PC-9 (cell line): ENCODE measurements at regions of chr5 and their contacts with region 1.

Region 1: DNA sequence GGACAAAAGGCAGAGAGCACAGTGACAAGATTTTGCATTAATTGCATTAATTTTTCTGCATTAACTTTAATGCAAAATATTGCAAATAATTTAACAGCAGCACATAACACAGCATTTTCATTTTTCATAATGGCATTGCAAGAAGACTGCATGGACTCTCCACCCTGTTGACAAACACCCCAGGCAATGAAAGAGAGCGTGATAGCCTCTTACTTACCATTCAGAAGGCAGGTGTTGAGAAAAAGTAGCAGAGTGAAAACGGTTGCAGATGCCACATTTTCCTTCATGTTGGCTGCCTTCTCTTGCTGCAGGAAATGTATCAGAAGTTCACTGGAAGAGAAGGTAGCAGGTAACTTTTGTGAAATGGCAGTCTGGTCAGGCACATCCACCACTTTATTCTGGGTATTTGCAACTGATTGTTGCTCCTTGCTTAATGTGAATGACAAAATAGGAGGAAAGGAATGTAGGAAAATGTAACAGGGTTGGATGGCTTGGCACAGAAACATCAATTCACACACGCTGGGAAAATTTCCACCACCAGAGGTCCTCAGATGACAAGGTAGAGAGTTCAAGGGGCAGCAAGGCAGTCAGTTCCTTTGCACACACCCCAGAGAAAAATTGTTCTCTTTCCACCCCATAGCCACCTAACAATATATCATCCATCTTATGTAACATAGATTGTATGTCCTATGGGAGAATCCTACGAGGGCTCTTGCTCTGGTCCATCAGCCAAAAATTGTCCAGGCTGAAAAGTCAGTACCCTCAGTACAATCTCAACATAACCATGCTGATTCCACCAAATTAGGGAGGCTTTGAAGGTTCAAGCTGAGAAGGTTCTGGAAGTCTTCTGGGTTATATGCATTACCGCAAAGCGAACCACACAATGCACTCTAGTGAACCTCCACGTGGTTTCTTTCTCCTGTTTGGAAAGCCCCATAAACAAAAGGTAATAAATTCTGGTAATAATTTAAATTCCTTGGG is 41.9 kb upstream of the AGXT2 start:
- DNase-seq: peak; percentile 44 to 46
- H3K4me3 ChIP-seq: no peak overlapping the region
- H3K27ac ChIP-seq: no peak overlapping the region
- H3K4me1 ChIP-seq: no peaks in the 10 kb centered on the region
- H3K27me3 ChIP-seq: peaks cover 72% of the 10 kb centered on the region
- CTCF ChIP-seq: peak; percentile 80

Region 2: GRCh38 chr5:35202319-35203111 is 112.9 kb after region 1 on chr5:
- CTCF ChIA-PET with region 1: no interaction called
- POLR2A ChIA-PET with region 1: no interaction called
- intact Hi-C with region 1: loop called (anchors 5 kb)
- DNase-seq: peak in 1 of 2 experiments; percentile 41
- H3K4me3 ChIP-seq: no peak overlapping the region
- H3K27ac ChIP-seq: no peak overlapping the region
- H3K4me1 ChIP-seq: no peaks in the 10 kb centered on the region
- H3K27me3 ChIP-seq: peaks cover 32% of the 10 kb centered on the region
- CTCF ChIP-seq: peak; percentile 67

Region 3: DNA sequence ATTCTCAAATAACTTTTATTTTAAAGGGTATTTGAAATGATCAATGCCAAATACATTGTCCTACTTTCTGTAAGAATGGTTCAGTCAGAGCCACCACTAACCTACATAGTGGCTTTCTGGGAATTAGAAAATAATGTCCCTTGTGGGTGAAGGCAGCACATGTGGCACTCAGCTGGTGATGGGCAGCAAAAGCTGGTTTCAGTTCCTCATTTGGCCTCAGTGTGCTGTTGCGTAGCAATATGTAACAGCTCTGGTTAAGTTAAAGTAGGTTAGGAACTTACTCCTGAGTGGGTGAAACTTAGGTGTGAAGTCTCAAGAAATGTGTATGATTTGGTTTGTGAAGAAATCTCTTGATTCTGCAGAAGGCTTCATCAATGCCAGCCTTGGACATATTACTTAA is 428.5 kb after region 1 on chr5:
- CTCF ChIA-PET with region 1: no interaction called
- POLR2A ChIA-PET with region 1: no interaction called
- intact Hi-C with region 1: no loop called
- DNase-seq: no peak
- H3K4me3 ChIP-seq: no peak overlapping the region
- H3K27ac ChIP-seq: no peak overlapping the region
- H3K4me1 ChIP-seq: no peaks in the 10 kb centered on the region
- H3K27me3 ChIP-seq: peaks cover 13% of the 10 kb centered on the region
- CTCF ChIP-seq: no peak

Region 4: GRCh38 chr5:35762368-35762767 is 672.7 kb after region 1 on chr5:
- CTCF ChIA-PET with region 1: no interaction called
- POLR2A ChIA-PET with region 1: no interaction called
- intact Hi-C with region 1: no loop called
- DNase-seq: no peak
- H3K4me3 ChIP-seq: no peak overlapping the region
- H3K27ac ChIP-seq: no peak overlapping the region
- H3K4me1 ChIP-seq: no peaks in the 10 kb centered on the region
- H3K27me3 ChIP-seq: 0 out of 2 replicates have a peak, but pooled peaks cover 3% of the 10 kb centered on the region
- CTCF ChIP-seq: no peak

Region 5: DNA sequence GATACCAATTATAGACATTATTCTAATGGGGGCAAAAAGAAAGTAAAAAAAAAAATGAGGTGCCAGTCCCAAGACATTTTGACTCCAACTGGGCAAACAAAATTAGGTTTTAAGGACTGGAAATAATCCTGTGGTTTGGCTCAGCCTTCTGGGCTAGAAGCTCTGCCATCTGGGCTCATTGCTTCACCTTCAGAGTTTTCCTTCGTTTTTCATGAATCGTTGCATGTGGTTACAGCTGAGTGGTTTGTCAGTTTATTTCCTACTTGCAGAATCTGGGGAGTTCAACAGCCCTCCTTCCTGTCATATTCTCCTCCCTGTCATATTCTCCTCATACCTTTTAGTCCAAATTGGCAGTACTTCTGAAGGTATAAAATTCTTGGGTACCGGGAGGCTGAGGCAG is 965.0 kb after region 1 on chr5:
- CTCF ChIA-PET with region 1: no interaction called
- POLR2A ChIA-PET with region 1: no interaction called
- intact Hi-C with region 1: no loop called
- DNase-seq: no peak
- H3K4me3 ChIP-seq: no peak overlapping the region
- H3K27ac ChIP-seq: no peak overlapping the region
- H3K4me1 ChIP-seq: no peaks in the 10 kb centered on the region; the same call in 1 of the 2 replicates
- H3K27me3 ChIP-seq: peaks cover 13% of the 10 kb centered on the region; the same call in 1 of the 2 replicates
- CTCF ChIP-seq: no peak

Region 6: GRCh38 chr5:36690041-36690961 is 1600.7 kb after region 1 on chr5:
- CTCF ChIA-PET with region 1: no interaction called
- POLR2A ChIA-PET with region 1: no interaction called
- intact Hi-C with region 1: loop called (anchors 1 kb)
- DNase-seq: peak; percentile 25 to 56
- H3K4me3 ChIP-seq: no peak overlapping the region
- H3K27ac ChIP-seq: no peak overlapping the region
- H3K4me1 ChIP-seq: peaks cover 5% of the 10 kb centered on the region; the same call in 1 of the 2 replicates
- H3K27me3 ChIP-seq: no peaks in the 10 kb centered on the region
- CTCF ChIP-seq: no peak